HCT116 (cell line): ENCODE measurements at regions of chr5 and their contacts with region 1.

Region 1: DNA sequence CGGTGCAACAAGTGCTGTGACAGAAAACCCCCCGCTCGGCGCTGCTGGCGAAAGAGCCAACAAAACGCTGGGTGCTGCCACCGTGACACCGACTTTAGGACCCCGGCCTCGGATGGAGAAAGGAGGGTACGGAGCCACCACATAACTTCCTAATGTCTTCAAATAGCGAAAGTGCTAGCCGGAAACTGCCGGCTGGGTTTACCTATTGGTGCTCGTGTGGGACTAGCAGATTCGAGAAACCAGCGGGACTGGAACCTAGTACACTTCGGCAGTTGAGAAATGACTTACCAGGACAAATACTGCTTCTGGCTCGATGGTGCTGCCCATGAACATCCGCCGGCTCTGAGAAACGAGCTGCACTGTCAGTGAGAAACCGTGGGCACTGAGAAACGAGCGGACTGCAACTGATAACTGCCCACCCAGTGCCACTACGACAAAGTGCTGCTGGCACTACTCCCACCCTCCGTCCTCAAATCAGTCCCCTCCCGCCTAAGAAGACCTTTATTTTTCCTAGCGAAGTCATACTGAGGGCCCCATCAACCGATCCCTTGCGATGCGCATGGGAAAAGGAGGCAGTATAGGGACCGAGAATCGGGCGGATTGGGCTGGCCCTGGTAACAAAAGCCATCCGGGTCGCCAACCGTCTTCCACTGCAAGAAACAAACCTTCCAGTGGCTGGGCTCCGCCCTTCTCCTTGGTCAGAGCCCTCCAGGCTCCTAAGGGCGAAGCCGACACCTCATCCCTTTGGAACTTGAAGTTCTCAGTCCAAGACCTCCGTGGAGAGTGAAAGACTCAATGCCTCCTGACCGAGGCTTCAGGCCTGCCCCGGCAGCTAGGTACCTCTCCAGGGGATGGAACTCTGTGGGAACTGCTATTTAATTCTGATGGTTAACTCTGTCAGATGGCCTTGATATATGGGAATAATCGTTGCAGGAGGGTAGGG is 27.0 kb upstream of the ANXA2R start:
- DNase-seq: peak; percentile 85
- ATAC-seq: peak; percentile 63
- H3K4me3 ChIP-seq: peak overlapping the region; percentile 76 to 77
- H3K27ac ChIP-seq: peak overlapping the region; percentile 93
- H3K4me1 ChIP-seq: peaks cover 12 to 24% of the 10 kb centered on the region in 2 experiments
- H3K27me3 ChIP-seq: no peaks in the 10 kb centered on the region
- CTCF ChIP-seq: no peak
- POLR2A ChIP-seq: peak; percentile 32
- RAD21 ChIP-seq: no peak

Region 2: DNA sequence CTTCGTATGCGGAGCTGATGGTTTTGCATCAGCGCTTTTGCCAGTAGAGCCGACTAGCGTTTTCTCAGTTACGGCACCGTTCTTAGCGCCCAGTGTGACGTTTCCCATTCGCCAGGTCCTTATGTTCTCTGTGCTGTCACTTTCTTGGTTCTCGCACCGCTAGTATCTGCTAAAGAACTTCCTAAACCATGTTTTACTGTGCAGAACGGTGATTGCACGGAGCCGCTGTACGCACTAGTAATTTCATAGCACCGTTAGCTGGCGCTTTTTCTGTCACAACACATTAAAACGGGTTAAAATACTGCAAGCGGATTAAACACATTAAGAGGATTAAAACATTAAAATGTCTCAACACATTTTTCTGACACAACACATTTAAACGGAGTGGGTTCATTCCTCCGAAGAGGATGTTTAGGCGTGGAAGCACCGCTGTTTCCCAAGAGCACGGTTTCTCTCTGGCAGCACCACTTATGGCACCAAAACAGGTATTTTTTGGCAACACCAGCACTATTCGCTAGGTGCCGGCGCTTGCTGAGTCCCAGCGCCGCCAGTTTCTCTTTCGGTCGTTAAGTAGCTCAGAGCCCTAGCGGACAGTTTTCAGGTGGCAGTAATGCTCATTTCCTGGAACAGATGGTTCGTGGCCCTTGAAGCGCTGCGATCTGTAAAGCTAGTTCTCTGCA is 47.3 kb before region 1 on chr5:
- CTCF ChIA-PET with region 1: interaction called, 9 read pairs
- POLR2A ChIA-PET with region 1: no interaction called
- RAD21 ChIA-PET with region 1: interaction called in 1 of 2 experiments, 4 read pairs
- intact Hi-C with region 1: loop called (anchors 2 kb)
- DNase-seq: peak; percentile 87
- ATAC-seq: peak; percentile 81
- H3K4me3 ChIP-seq: peak overlapping the region; percentile 67 to 68
- H3K27ac ChIP-seq: no peak overlapping the region
- H3K4me1 ChIP-seq: peaks cover 4 to 27% of the 10 kb centered on the region in 2 experiments; a peak in 3 of 4 replicates
- H3K27me3 ChIP-seq: no peaks in the 10 kb centered on the region
- CTCF ChIP-seq: peak; percentile 29 to 65 (median 55); a peak in 5 of 6 replicates
- POLR2A ChIP-seq: no peak
- RAD21 ChIP-seq: peak; percentile 19; the same call in 1 of the 2 replicates